ENCODE measurements at regions of chr5 and their contacts with region 1.

Region 1: GRCh38 chr5:54229041-54229780 is 81.2 kb downstream of the ARL15 start:
- DNase-seq: peak; percentile 71
- H3K4me3 ChIP-seq: no peak overlapping the region
- H3K27ac ChIP-seq: no peak overlapping the region
- H3K4me1 ChIP-seq: no peaks in the 10 kb centered on the region
- H3K27me3 ChIP-seq: no peaks in the 10 kb centered on the region
- CTCF ChIP-seq: peak; percentile 93

Region 2: GRCh38 chr5:52948418-52949076 is 1280.7 kb before region 1 on chr5:
- CTCF ChIA-PET with region 1: no interaction called
- POLR2A ChIA-PET with region 1: no interaction called
- intact Hi-C with region 1: loop called (anchors 10 kb)
- DNase-seq: peak; percentile 82
- H3K4me3 ChIP-seq: no peak overlapping the region
- H3K27ac ChIP-seq: no peak overlapping the region
- H3K4me1 ChIP-seq: peaks cover 15% of the 10 kb centered on the region
- H3K27me3 ChIP-seq: no peaks in the 10 kb centered on the region
- CTCF ChIP-seq: peak; percentile 81

Region 3: DNA sequence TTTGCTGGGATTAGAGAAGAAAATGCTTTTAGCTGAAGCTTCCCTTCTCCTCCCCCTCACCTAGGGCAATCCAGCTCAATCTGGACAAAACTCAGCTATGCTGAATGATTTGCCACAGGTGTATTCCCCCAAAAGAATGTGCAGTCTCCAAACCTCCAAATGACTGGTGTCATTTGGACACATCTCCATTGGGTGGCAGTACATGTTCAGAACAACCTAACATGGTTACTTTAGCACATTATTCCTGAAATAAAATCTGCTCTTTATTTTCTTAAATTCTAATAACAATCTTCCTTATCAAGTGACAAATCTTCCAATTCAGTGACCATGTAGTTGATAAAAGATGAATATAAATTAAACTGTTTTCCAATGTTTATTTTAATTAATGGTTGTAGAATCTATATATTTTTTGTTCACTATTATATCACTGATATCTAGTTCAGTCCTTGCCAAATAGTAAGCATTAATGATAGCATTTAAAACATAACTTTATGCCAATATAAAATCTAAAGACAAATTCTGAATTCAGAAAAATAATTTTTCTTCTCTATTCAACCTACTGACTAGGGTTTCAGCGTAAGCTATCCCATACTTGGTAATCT is 1058.4 kb before region 1 on chr5:
- CTCF ChIA-PET with region 1: no interaction called
- POLR2A ChIA-PET with region 1: no interaction called
- intact Hi-C with region 1: loop called (anchors 5 kb)
- DNase-seq: peak; percentile 17
- H3K4me3 ChIP-seq: no peak overlapping the region
- H3K27ac ChIP-seq: no peak overlapping the region
- H3K4me1 ChIP-seq: no peaks in the 10 kb centered on the region
- H3K27me3 ChIP-seq: no peaks in the 10 kb centered on the region
- CTCF ChIP-seq: peak; percentile 65

Region 4: GRCh38 chr5:53262348-53262970 is 966.8 kb before region 1 on chr5:
- CTCF ChIA-PET with region 1: interaction called, 3 read pairs
- POLR2A ChIA-PET with region 1: no interaction called
- intact Hi-C with region 1: loop called (anchors 1 kb)
- DNase-seq: peak; percentile 16
- H3K4me3 ChIP-seq: no peak overlapping the region
- H3K27ac ChIP-seq: no peak overlapping the region
- H3K4me1 ChIP-seq: no peaks in the 10 kb centered on the region
- H3K27me3 ChIP-seq: no peaks in the 10 kb centered on the region
- CTCF ChIP-seq: peak; percentile 53

Measured in A673 (cell line).